AG04450 (cell line): ENCODE measurements at regions of chr4 and their contacts with region 1.

Region 1: DNA sequence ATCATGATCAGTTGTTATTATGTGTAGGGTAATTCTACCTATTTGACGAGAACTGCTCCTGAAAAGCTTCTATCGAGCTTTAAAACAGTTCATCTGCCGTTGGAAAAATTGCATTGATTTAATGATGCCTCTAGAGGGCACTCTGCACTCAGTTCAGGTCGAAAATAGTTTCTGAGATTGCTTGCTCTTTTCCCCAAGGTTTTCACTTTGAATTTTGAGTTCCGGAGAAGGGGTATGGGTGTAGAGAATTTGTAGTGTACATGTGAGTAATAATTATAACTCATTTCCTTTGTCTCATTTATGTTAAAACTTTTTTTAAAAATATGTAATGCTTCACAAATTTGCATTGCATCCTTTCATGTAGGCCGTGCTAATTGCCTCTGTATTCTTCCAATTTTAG is 28.4 kb upstream of the TNIP3 start:
- DNase-seq: peak; percentile 15
- H3K4me3 ChIP-seq: peak overlapping the region; percentile 45
- H3K27ac ChIP-seq: no peak overlapping the region
- H3K27me3 ChIP-seq: no peaks in the 10 kb centered on the region
- CTCF ChIP-seq: peak; percentile 83

Region 2: DNA sequence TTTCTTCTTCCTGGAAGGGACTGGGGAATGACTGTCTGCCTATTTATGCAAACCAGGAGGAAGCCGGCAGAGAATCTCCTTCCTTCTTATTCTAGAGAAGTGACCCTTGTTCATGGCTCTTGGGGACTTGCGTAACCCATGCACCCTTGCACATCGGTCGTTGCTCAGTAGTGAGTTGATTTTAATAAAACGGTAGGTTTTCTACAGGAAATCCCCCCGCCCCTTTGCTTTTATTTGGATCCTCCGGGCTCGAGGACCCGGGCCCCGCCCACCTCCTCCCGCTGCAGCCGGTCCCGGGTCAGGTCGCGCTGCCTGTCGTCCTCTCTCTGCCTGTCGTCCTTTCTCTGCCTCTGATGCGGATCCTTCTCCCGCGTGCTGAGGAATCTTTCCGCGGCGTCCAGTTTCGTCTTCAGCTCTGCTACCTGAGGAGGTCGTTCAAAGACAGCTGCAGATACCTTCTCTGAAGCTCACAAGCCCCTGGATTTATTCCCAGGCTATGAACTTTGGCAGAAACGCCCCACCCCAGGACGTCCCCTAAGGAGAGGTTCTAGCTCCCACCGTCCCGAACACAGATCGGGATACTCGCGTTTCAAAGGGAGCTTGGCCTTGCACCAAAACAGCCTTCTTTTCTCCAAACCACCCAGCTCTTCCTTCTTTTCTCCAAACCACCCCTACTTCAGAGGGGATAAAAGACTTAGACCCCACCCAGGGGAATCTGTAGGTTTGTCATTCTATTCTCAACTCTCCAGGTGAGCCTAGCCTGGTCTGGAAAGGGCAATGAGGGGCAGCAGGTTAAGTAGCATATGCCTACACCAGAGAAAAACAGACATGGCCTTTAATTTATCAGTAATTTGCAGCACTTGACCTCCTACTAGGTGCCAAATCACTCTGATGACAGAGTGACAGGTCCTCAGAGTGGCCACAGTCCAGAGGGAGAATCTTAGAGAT is 35.4 kb before region 1 on chr4:
- CTCF ChIA-PET with region 1: interaction called, 28 read pairs
- POLR2A ChIA-PET with region 1: no interaction called
- DNase-seq: no peak
- H3K4me3 ChIP-seq: peak overlapping the region; percentile 59
- H3K27ac ChIP-seq: no peak overlapping the region
- H3K27me3 ChIP-seq: no peaks in the 10 kb centered on the region
- CTCF ChIP-seq: no peak

Region 3: GRCh38 chr4:121182296-121182695 is 10.2 kb before region 1 on chr4:
- CTCF ChIA-PET with region 1: interaction called, 22 read pairs
- POLR2A ChIA-PET with region 1: no interaction called
- DNase-seq: no peak
- H3K4me3 ChIP-seq: no peak overlapping the region
- H3K27ac ChIP-seq: no peak overlapping the region
- H3K27me3 ChIP-seq: no peaks in the 10 kb centered on the region
- CTCF ChIP-seq: no peak

Region 4: GRCh38 chr4:121217351-121217750 is 24.9 kb after region 1 on chr4:
- CTCF ChIA-PET with region 1: interaction called, 38 read pairs
- POLR2A ChIA-PET with region 1: no interaction called
- DNase-seq: peak; percentile 13
- H3K4me3 ChIP-seq: no peak overlapping the region
- H3K27ac ChIP-seq: no peak overlapping the region
- H3K27me3 ChIP-seq: no peaks in the 10 kb centered on the region
- CTCF ChIP-seq: no peak

Region 5: GRCh38 chr4:121243485-121243884 is 51.0 kb after region 1 on chr4:
- CTCF ChIA-PET with region 1: interaction called, 299 read pairs
- POLR2A ChIA-PET with region 1: no interaction called
- DNase-seq: no peak
- H3K4me3 ChIP-seq: peak overlapping the region; percentile 30
- H3K27ac ChIP-seq: no peak overlapping the region
- H3K27me3 ChIP-seq: peaks cover 3% of the 10 kb centered on the region
- CTCF ChIP-seq: no peak

Region 6: DNA sequence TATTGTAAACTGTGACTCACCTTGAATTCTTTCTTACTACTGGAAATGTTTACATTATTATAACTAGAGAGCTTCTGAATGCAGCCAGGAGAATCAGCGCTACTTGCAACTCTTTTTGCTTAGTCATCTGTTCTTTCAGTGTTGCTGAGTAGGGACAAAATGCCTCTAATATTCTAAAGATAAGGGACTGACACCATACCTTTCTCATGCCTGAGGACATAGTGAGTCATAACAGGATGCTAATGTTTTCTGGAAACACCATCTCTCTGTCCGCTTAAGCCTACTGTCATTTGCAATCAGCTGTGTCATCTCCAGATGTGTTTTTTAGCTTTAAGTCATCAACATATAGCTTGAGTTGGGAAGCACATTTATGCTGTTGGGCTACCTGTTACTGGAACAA is 80.0 kb after region 1 on chr4:
- CTCF ChIA-PET with region 1: interaction called, 17 read pairs
- POLR2A ChIA-PET with region 1: no interaction called
- DNase-seq: peak; percentile 24
- H3K4me3 ChIP-seq: no peak overlapping the region
- H3K27ac ChIP-seq: no peak overlapping the region
- H3K27me3 ChIP-seq: no peaks in the 10 kb centered on the region
- CTCF ChIP-seq: no peak

Region 7: GRCh38 chr4:121380776-121381462 is 188.4 kb after region 1 on chr4 and contains the start of gene QRFPR:
- CTCF ChIA-PET with region 1: no interaction called
- POLR2A ChIA-PET with region 1: no interaction called
- DNase-seq: no peak
- H3K4me3 ChIP-seq: peak within 1 kb of the TSS; percentile 17; the same call in 1 of the 2 replicates
- H3K27ac ChIP-seq: no peak within 1 kb of the TSS
- H3K27me3 ChIP-seq: peaks cover 20% of the 10 kb centered on the region
- CTCF ChIP-seq: no peak
- polyA plus RNA-seq, gene QRFPR: not detected in 2 replicates

Region 8: GRCh38 chr4:121758925-121759568 is 566.6 kb after region 1 on chr4:
- CTCF ChIA-PET with region 1: no interaction called
- POLR2A ChIA-PET with region 1: no interaction called
- DNase-seq: no peak
- H3K4me3 ChIP-seq: no peak overlapping the region
- H3K27ac ChIP-seq: no peak overlapping the region
- H3K27me3 ChIP-seq: no peaks in the 10 kb centered on the region
- CTCF ChIP-seq: no peak